CD8-positive, alpha-beta T cell (primary cell): ENCODE measurements at regions of chr7 and their contacts with region 1.

Region 1: DNA sequence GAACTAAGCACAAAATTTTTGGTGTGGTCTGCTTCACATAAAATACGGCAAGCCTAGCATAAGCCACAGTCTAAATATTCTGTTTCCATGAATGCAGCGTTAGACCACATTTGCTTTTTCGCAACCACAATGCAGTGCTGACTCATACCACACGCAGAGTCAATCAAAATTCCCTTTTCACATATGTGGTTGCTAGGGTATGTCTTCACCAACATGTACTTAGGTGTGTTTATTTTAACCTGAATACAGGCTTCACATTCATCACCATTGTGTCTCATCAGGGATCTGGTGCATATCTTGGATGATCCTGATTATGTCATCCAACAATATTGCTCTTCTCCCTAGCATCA is 90.8 kb downstream of the CHN2 start:
- DNase-seq: peak in 7 of 9 experiments; percentile 15 to 83 (median 34)
- ATAC-seq: peak; percentile 77
- H3K4me3 ChIP-seq: no peak overlapping the region
- H3K4me3 Mint-ChIP-seq: no peak overlapping the region
- H3K27ac ChIP-seq: no peak overlapping the region
- H3K27ac Mint-ChIP-seq: no peak overlapping the region
- H3K4me1 ChIP-seq: peaks cover 11% of the 10 kb centered on the region
- H3K4me1 Mint-ChIP-seq: peaks cover 30% of the 10 kb centered on the region
- H3K27me3 ChIP-seq: no peaks in the 10 kb centered on the region
- H3K27me3 Mint-ChIP-seq: no peaks in the 10 kb centered on the region
- CTCF ChIP-seq: no peak

Region 2: DNA sequence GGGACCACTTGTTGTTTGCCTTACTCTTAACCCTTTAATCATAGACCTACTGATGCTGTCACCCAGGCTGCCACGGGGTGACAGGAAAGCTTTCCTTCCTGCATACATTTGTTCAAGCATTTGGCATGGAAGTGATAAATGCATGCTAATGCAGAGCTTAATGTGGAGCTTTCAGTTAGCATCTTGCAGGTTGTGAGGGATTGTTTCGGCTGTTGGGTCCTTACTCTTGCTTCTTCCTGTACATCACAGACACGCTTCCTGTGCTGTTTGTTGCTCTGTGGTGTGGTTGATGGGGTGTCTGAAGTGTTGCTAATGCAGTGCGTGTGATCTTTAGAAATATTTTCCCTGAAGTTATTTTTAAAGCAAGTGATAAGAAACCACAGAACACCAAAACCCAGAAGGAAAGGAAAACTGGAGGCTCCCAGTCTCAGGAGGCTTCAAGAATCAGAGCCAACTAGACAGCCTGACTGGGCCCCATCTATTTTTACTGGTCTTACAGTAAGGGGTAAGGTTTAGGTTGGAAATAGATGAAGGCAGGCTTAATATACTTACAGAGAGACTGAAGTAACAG is 52.2 kb after region 1 on chr7:
- CTCF ChIA-PET with region 1: no interaction called
- POLR2A ChIA-PET with region 1: no interaction called
- intact Hi-C with region 1: loop called (anchors 2 to 5 kb)
- DNase-seq: peak; percentile 19 to 87 (median 50)
- ATAC-seq: peak; percentile 91
- H3K4me3 ChIP-seq: peak overlapping the region in 1 of 2 experiments; percentile 16
- H3K4me3 Mint-ChIP-seq: peak overlapping the region; percentile 64
- H3K27ac ChIP-seq: peak overlapping the region; percentile 30 to 53
- H3K27ac Mint-ChIP-seq: peak overlapping the region; percentile 83
- H3K4me1 ChIP-seq: peaks cover 30% of the 10 kb centered on the region
- H3K4me1 Mint-ChIP-seq: peaks cover 49% of the 10 kb centered on the region
- H3K27me3 ChIP-seq: no peaks in the 10 kb centered on the region
- H3K27me3 Mint-ChIP-seq: no peaks in the 10 kb centered on the region
- CTCF ChIP-seq: no peak